Panc1 (cell line): ENCODE measurements at regions of chr19 and their contacts with region 1.

Region 1: GRCh38 chr19:1269478-1270212 is 513 bp downstream of the CIRBP start:
- DNase-seq: no peak
- ATAC-seq: peak; percentile 26
- H3K4me3 ChIP-seq: peak overlapping the region; percentile 54 to 72
- H3K27ac ChIP-seq: peak overlapping the region; percentile 91
- H3K4me1 ChIP-seq: peaks cover 40% of the 10 kb centered on the region
- H3K27me3 ChIP-seq: no peaks in the 10 kb centered on the region
- CTCF ChIP-seq: no peak

Region 2: GRCh38 chr19:1243761-1244692 is 25.6 kb before region 1 on chr19:
- CTCF ChIA-PET with region 1: interaction called, 46 read pairs
- POLR2A ChIA-PET with region 1: interaction called, 10 read pairs
- in situ Hi-C with region 1: no loop called
- intact Hi-C with region 1: no loop called
- DNase-seq: no peak
- ATAC-seq: peak; percentile 31
- H3K4me3 ChIP-seq: peak overlapping the region; percentile 12 to 70; a peak in 3 of 4 replicates
- H3K27ac ChIP-seq: peak overlapping the region; percentile 80
- H3K4me1 ChIP-seq: peaks cover 34% of the 10 kb centered on the region
- H3K27me3 ChIP-seq: no peaks in the 10 kb centered on the region
- CTCF ChIP-seq: peak; percentile 94

Region 3: GRCh38 chr19:1249298-1249989 is 20.2 kb before region 1 on chr19:
- CTCF ChIA-PET with region 1: interaction called, 46 read pairs
- POLR2A ChIA-PET with region 1: interaction called, 11 read pairs
- in situ Hi-C with region 1: no loop called
- intact Hi-C with region 1: no loop called
- DNase-seq: no peak
- ATAC-seq: peak; percentile 49
- H3K4me3 ChIP-seq: peak overlapping the region; percentile 51 to 59
- H3K27ac ChIP-seq: peak overlapping the region; percentile 63; the same call in 1 of the 2 replicates
- H3K4me1 ChIP-seq: peaks cover 27% of the 10 kb centered on the region
- H3K27me3 ChIP-seq: no peaks in the 10 kb centered on the region
- CTCF ChIP-seq: no peak

Region 4: GRCh38 chr19:1287354-1288225 is 17.9 kb after region 1 on chr19:
- CTCF ChIA-PET with region 1: no interaction called
- POLR2A ChIA-PET with region 1: interaction called, 22 read pairs
- in situ Hi-C with region 1: no loop called
- intact Hi-C with region 1: no loop called
- DNase-seq: no peak
- ATAC-seq: peak; percentile 67
- H3K4me3 ChIP-seq: peak overlapping the region in 1 of 2 experiments; percentile 42; a peak in 1 of 4 replicates
- H3K27ac ChIP-seq: no peak overlapping the region
- H3K4me1 ChIP-seq: peaks cover 16% of the 10 kb centered on the region
- H3K27me3 ChIP-seq: no peaks in the 10 kb centered on the region
- CTCF ChIP-seq: no peak

Region 5: DNA sequence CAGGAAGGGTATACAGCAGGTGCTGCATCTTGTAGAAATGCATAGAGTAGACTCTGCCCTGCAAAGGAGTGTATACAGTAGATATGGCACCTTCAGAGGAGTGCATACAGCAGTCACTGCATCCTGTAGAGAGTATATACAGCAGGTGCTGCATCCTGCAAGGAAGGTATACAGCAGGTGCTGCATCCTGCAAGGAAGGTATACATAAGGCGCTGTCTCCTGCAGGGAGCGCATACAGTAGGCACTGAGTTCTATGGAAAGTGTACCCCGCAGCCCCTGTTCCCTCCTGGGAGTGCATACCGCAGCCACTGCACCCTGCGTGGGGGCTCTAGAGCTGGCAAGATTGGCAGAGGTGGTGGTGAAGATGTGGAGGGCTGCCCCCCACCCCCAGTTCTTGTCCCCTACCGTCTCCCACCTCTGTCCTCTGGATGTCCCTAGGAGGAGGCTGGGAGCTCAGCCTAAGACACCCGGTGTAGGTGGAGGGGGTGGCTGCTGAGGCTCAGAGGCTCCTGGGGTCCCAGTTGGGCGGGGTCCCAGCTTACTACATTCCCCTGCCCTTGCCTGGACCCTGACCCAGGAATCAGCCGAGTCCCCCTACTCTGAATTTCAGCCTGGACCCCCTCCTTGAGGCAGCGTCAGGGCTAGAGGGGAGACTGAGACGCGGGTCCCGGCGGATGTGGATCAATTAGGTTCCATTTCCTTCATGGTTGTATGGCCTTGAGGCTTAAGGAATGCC is 245.5 kb after region 1 on chr19:
- CTCF ChIA-PET with region 1: no interaction called
- POLR2A ChIA-PET with region 1: interaction called, 12 read pairs
- in situ Hi-C with region 1: no loop called
- intact Hi-C with region 1: no loop called
- DNase-seq: no peak
- ATAC-seq: no peak
- H3K4me3 ChIP-seq: no peak overlapping the region
- H3K27ac ChIP-seq: no peak overlapping the region
- H3K4me1 ChIP-seq: no peaks in the 10 kb centered on the region
- H3K27me3 ChIP-seq: no peaks in the 10 kb centered on the region
- CTCF ChIP-seq: no peak